ENCODE measurements at regions of chr10 and their contacts with region 1.

Region 1: DNA sequence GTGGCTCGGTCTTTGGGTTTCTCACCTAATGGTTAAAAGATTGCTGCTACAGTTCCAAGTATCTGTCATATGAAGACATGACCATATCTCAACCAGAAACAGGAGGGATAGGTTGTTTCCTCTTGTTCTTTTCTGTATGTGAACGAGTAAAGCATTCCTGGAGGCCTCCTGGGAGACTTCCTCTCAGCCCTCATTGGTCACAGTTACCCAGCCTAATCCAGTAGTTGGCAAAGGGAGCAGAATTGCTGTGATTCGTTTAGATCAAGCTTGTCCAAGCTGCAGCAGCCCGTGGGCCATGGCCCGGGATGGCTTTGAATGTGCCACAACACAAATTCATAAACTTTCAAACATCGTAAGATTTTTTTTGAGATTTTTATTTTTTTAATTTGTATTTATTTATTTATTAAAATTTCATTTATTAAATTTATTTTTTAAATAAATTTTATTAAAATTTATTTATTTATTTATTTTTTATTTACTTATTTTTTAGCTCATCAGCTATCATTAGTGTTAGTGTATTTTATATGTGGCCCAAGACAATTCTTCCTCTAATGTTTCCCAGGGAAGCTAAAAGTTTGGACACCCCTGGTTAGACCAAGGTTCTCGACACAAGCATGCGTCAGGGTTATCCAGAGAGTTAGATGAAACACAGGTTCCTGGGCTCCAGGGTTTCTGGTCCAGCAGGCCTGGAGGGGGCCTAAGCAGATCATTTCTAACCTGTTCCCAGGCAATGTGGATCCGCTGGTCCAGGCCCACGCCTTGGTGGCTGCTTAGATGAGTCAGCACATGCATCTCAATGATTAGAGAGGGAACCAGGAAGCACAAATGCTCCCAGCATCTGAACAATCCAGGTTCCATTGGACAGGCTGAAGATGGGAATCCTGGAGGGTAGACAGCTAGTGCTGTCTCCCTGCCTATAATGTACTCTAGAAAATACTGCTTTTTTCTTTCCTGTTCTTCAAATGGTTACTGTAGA is 25.6 kb downstream of the CDC123 start:
- DNase-seq: no peak
- H3K4me3 ChIP-seq: no peak overlapping the region
- H3K27ac ChIP-seq: peak overlapping the region; percentile 65 to 72
- H3K4me1 ChIP-seq: peaks cover 5 to 35% of the 10 kb centered on the region in 2 donors
- H3K27me3 ChIP-seq: no peaks in the 10 kb centered on the region
- CTCF ChIP-seq: no peak

Region 2: DNA sequence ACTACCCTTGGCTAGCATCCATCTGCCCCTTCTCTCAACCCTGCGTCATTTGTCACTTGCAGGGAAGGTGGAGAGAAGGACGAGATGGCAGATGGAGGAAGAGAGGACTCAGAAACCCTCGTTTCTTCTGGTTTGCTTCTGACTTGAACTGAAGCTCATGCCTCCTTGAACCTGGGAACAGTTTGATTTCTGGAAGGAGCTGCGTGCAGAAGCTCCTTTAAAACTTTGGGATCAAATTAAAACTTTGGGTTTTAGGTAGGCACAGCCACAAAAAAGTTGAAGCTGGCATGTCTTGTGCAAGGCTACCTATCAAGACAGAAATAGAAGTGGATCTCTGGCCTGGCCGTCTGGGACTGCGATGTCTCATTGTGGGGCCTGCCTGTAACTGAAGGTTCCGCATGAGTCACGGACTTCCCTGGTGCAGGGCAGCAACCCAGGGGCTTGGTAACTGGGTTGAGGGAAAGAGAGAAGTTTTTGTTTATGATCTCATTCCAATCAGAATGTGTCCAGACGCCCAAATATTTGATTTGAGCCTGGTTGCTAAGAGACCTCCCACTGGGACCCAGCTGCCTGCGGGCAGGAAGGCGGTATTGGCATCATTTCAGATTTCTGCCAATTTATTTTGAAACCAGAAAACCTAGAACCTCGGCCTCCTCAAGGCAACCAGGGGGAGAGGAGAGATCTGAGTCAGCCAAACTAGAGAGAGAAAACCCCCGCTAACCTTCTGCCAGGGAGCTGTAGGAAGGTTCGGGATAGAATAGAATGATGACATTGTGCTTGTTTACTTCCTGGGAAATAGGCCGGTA is 112.0 kb after region 1 on chr10:
- intact Hi-C with region 1: loop called (anchors 5 kb)
- DNase-seq: peak; percentile 80 to 96
- H3K4me3 ChIP-seq: peak overlapping the region in 1 of 2 donors; percentile 30
- H3K27ac ChIP-seq: peak overlapping the region; percentile 85 to 86
- H3K4me1 ChIP-seq: peaks cover 0 to 18% of the 10 kb centered on the region in 2 donors
- H3K27me3 ChIP-seq: no peaks in the 10 kb centered on the region
- CTCF ChIP-seq: no peak

Region 3: DNA sequence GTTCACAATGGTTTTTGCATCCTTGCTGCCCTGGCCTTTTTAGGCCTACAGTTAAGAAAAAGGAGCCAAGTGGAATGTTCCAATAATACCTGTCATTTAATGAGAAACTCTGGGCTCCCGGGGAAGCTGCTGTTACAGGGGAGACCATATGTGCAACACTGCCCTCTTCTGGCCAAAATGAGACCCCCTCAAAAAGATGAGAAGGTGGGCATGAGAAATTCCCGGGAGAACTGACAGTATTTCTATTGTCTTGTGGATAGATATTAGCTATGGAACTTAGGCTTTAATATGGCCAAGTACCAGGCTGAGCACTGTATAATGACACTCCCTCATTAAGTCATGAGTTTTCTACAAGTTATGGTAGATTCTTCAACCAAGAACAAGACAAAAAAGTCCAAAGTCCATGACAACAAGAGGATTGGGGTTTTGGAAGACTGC is 680.5 kb after region 1 on chr10:
- intact Hi-C with region 1: loop called (anchors 10 kb)
- DNase-seq: no peak
- H3K4me3 ChIP-seq: no peak overlapping the region
- H3K27ac ChIP-seq: peak overlapping the region; percentile 90 to 91
- H3K4me1 ChIP-seq: peaks cover 4 to 26% of the 10 kb centered on the region in 2 donors
- H3K27me3 ChIP-seq: no peaks in the 10 kb centered on the region
- CTCF ChIP-seq: peak; percentile 4 to 68 (median 56)

Measured in ascending aorta (tissue), 2 donors.